ENCODE measurements at regions of chrX and their contacts with region 1.

Region 1: DNA sequence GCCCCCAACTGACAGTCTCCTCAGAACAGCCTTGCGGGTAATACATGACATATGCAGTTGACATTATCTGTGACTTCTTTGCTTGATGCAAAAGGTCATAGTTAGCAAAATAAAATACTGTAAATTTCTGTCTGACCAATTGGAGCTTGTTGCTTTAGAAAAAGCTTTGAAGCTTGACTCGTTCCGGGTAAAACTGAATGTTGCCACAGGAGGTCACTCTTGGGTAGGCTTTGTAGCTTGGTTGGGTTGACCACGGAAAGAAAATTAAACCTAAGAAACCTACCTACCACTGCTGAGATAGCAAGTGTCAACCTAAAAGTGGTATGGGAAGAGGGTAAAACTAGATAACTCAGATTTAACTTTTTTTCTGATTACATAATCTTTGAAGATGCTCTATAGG is 23.2 kb downstream of the PRPS2 start:
- DNase-seq: peak in 13 of 14 experiments; percentile 5 to 67 (median 26)
- ATAC-seq: peak; percentile 63
- H3K4me3 ChIP-seq: no peak overlapping the region
- H3K4me3 Mint-ChIP-seq: no peak overlapping the region
- H3K27ac ChIP-seq: no peak overlapping the region
- H3K27ac Mint-ChIP-seq: no peak overlapping the region
- H3K4me1 ChIP-seq: no peaks in the 10 kb centered on the region
- H3K4me1 Mint-ChIP-seq: no peaks in the 10 kb centered on the region
- H3K27me3 ChIP-seq: no peaks in the 10 kb centered on the region
- H3K27me3 Mint-ChIP-seq: no peaks in the 10 kb centered on the region
- CTCF ChIP-seq: peak; percentile 29

Region 2: GRCh38 chrX:12894074-12895030 is 79.9 kb after region 1 on chrX:
- CTCF ChIA-PET with region 1: interaction called, 3 read pairs
- POLR2A ChIA-PET with region 1: interaction called, 5 read pairs
- intact Hi-C with region 1: loop called (anchors 1 to 2 kb)
- DNase-seq: peak; percentile 4 to 66 (median 38)
- ATAC-seq: peak; percentile 65
- H3K4me3 ChIP-seq: no peak overlapping the region
- H3K4me3 Mint-ChIP-seq: no peak overlapping the region
- H3K27ac ChIP-seq: no peak overlapping the region
- H3K27ac Mint-ChIP-seq: no peak overlapping the region
- H3K4me1 ChIP-seq: peaks cover 4% of the 10 kb centered on the region
- H3K4me1 Mint-ChIP-seq: peaks cover 35% of the 10 kb centered on the region
- H3K27me3 ChIP-seq: no peaks in the 10 kb centered on the region
- H3K27me3 Mint-ChIP-seq: no peaks in the 10 kb centered on the region
- CTCF ChIP-seq: peak; percentile 63

Region 3: GRCh38 chrX:13646154-13646549 is 831.7 kb after region 1 on chrX:
- CTCF ChIA-PET with region 1: interaction called, 3 read pairs
- POLR2A ChIA-PET with region 1: no interaction called
- intact Hi-C with region 1: loop called in 1 of 2 experiments (anchors 10 kb)
- DNase-seq: peak in 11 of 14 experiments; percentile 2 to 52 (median 19)
- ATAC-seq: no peak
- H3K4me3 ChIP-seq: no peak overlapping the region
- H3K4me3 Mint-ChIP-seq: no peak overlapping the region
- H3K27ac ChIP-seq: no peak overlapping the region
- H3K27ac Mint-ChIP-seq: no peak overlapping the region
- H3K4me1 ChIP-seq: no peaks in the 10 kb centered on the region
- H3K4me1 Mint-ChIP-seq: peaks cover 11% of the 10 kb centered on the region
- H3K27me3 ChIP-seq: no peaks in the 10 kb centered on the region
- H3K27me3 Mint-ChIP-seq: no peaks in the 10 kb centered on the region
- CTCF ChIP-seq: no peak